Esophagus muscularis mucosa (tissue), 4 donors: ENCODE measurements at regions of chr19 and their contacts with region 1.

Region 1: GRCh38 chr19:55265723-55266386 is 7.0 kb upstream of the PPP6R1 start:
- DNase-seq: no peak
- H3K4me3 ChIP-seq: no peak overlapping the region
- H3K27ac ChIP-seq: no peak overlapping the region
- H3K4me1 ChIP-seq: no peaks in the 10 kb centered on the region
- H3K27me3 ChIP-seq: no peaks in the 10 kb centered on the region
- CTCF ChIP-seq: no peak
- EP300 ChIP-seq: no peak
- POLR2A ChIP-seq: no peak

Region 2: DNA sequence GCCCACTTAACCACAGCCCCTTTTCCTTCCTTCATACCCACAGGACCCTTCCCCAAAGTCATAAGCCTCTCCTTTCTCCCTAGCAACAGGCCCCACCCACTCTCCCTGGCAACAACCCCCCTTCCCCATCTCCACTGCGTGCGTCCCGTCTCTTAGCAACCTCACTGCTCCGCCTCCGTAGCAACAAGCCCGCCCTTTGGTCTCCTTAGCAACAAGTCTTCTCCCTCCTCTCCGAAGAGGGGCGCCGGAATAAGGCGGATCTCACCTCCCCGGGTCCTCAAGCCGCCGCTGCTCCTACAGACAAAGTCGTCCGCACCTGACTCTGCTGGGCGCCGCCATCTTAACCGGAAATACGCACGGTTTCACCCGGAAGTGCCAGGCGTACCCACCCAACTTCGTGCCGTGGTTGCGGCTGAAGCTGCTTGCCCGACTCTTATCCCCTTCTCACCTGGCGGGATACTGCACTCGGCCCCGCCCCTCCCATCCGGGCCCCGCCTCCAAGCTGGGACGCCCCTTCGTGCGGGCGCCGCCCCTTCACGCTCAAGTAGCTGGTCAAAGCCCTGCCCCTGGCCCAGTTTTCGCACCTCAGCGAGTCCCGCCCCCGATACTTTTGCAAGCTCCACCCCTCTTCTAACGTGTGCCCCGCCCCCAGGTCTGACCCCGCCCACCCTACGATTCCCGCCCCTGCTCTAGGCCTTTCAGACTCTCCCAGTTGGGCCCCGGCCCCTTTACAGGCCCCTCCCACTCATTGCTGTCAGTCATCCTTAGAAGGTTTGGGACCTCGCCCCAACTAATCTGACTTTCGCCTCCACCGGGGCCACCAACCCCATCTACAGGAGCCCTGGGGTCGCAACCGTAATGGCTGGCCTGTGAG is 14.2 kb after region 1 on chr19 and contains the start of gene HSPBP1:
- intact Hi-C with region 1: loop called (anchors 2 kb)
- DNase-seq: peak; percentile 98
- H3K4me3 ChIP-seq: peak within 1 kb of the TSS; percentile 71 to 83 (median 77)
- H3K27ac ChIP-seq: peak within 1 kb of the TSS; percentile 77 to 87 (median 80)
- H3K4me1 ChIP-seq: peaks cover 13 to 50% (median 43%) of the 10 kb centered on the region in 4 donors
- H3K27me3 ChIP-seq: peaks cover 0 to 7% (median 0%) of the 10 kb centered on the region in 4 donors
- CTCF ChIP-seq: peak in 1 of 3 experiments; percentile 9
- EP300 ChIP-seq: no peak
- POLR2A ChIP-seq: no peak
- total RNA-seq, gene HSPBP1: 28.5 to 44.0 (median 32.2) TPM

Region 3: DNA sequence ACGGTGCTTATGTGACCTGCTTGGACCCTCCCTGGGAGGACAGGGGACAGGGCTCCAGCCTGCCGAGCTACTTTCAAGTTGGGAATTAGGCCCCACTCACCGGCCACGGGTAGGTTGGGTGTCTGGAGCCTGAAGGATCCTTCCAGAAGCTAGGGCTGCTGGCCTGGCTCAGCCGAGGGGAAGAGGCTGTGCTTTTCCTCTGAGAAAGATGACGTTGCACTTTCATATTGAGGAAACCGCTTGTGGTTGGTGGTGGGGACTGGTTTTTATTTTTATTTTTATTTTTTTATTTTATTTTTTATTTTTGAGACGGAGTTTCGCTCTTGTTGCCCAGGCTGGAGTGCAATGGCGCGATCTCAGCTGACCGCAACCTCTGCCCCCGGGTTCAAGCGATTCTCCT is 59.3 kb after region 1 on chr19 and contains the start of gene TMEM150B:
- intact Hi-C with region 1: no loop called
- DNase-seq: no peak
- H3K4me3 ChIP-seq: no peak within 1 kb of the TSS
- H3K27ac ChIP-seq: peak within 1 kb of the TSS in 2 of 4 donors; percentile 11 to 43
- H3K4me1 ChIP-seq: no peaks in the 10 kb centered on the region
- H3K27me3 ChIP-seq: peaks cover 0 to 24% (median 1%) of the 10 kb centered on the region in 4 donors
- CTCF ChIP-seq: no peak
- EP300 ChIP-seq: no peak
- POLR2A ChIP-seq: no peak
- total RNA-seq, gene TMEM150B: 0.83 to 5.2 (median 2.7) TPM